Activated naive CD4-positive, alpha-beta T cell treated with anti-CD3 and anti-CD28 coated beads for 36 hours (primary cell): ENCODE measurements at regions of chr2 and their contacts with region 1.

Region 1: DNA sequence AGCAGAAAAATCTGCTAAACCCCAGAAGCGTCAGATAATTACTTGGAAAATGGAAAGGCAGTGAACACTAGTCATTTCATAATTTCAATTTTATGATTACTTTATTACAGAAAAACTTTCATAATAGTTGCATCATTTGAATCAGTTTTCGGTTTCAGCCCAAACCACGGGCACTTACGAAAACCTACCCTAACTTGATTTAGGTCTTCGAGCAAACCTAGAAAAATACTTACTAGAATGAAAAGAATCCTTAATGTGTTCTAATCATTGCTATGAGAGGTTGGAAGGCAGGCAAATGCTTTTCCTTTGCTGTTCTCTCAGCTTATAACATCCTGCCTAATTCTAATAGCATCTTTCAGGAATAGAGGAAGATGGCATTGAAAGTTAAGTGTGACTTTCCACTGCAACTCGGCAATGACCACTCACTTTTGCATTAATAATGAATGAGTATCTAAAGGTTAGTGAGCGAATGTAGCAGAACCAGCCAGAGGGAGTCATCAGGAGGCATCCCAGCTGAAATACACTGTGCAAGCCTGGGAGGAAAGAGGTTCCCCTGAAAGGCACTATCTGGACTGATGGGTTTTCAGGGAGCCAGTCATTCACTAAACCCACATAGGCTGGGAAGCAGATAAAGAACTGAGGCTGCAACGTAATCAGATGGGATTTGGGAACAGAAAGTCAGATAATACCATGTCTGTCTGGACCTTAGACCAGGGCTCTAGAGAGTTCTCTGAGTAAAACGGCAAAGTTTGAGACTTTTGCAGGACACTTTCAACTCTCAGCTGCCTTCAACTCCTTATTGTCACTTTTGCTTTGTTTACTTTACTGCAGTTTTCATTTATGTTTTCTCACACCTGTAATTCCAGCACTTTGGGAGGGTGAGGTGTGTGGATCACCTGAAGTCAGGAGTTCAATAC is 520.8 kb downstream of the RNF144A start:
- DNase-seq: peak; percentile 69
- H3K4me3 Mint-ChIP-seq: no peak overlapping the region
- H3K27ac Mint-ChIP-seq: peak overlapping the region; percentile 87
- H3K4me1 Mint-ChIP-seq: peaks cover 68% of the 10 kb centered on the region
- H3K27me3 Mint-ChIP-seq: no peaks in the 10 kb centered on the region

Region 2: GRCh38 chr2:7450188-7450832 is 12.3 kb after region 1 on chr2:
- CTCF ChIA-PET with region 1: interaction called, 10 read pairs
- intact Hi-C with region 1: loop called (anchors 1 kb)
- DNase-seq: peak; percentile 75
- H3K4me3 Mint-ChIP-seq: peak overlapping the region; percentile 41
- H3K27ac Mint-ChIP-seq: peak overlapping the region; percentile 88
- H3K4me1 Mint-ChIP-seq: peaks cover 66% of the 10 kb centered on the region
- H3K27me3 Mint-ChIP-seq: no peaks in the 10 kb centered on the region

Region 3: DNA sequence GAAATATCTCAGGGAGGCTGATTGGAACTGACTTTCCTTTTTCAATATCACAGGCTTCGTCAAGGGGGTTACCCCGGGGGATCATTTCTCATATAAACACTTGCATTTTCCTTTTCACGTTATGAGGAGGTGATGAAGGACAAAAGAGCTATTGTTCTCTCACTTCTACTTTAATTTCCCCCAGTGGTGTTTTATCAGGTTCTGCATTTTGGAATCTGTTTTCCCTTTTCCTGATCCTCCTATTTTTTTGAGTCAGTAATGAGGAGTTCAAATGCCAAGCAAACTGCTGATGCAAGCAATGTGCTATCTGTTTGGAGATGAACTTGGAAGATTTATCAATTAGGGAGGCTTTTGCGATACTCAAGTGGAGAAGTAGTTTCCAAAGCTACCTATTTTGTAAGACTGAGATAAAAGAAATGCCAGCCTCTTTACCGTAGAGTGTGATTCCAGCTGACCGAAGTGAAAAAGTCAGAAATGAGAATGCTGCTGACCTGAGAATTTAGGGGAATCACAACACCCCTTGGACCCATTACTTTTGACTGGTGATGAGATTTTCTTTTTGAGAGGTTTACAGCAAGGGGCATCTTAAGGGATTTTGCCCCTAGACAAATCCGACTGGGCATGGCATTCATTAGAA is 35.3 kb after region 1 on chr2:
- CTCF ChIA-PET with region 1: no interaction called
- intact Hi-C with region 1: loop called (anchors 1 kb)
- DNase-seq: no peak
- H3K4me3 Mint-ChIP-seq: no peak overlapping the region
- H3K27ac Mint-ChIP-seq: peak overlapping the region; percentile 72
- H3K4me1 Mint-ChIP-seq: peaks cover 46% of the 10 kb centered on the region
- H3K27me3 Mint-ChIP-seq: no peaks in the 10 kb centered on the region

Region 4: GRCh38 chr2:7567646-7568045 is 129.7 kb after region 1 on chr2:
- CTCF ChIA-PET with region 1: no interaction called
- intact Hi-C with region 1: loop called (anchors 1 kb)
- DNase-seq: peak; percentile 82
- H3K4me3 Mint-ChIP-seq: peak overlapping the region; percentile 36
- H3K27ac Mint-ChIP-seq: peak overlapping the region; percentile 82
- H3K4me1 Mint-ChIP-seq: peaks cover 58% of the 10 kb centered on the region
- H3K27me3 Mint-ChIP-seq: no peaks in the 10 kb centered on the region

Region 5: GRCh38 chr2:7758073-7758759 is 320.2 kb after region 1 on chr2:
- CTCF ChIA-PET with region 1: interaction called, 3 read pairs
- intact Hi-C with region 1: loop called (anchors 5 kb)
- DNase-seq: no peak
- H3K4me3 Mint-ChIP-seq: no peak overlapping the region
- H3K27ac Mint-ChIP-seq: no peak overlapping the region
- H3K4me1 Mint-ChIP-seq: peaks cover 12% of the 10 kb centered on the region
- H3K27me3 Mint-ChIP-seq: peaks cover 12% of the 10 kb centered on the region

Region 6: GRCh38 chr2:7930800-7931635 is 493.0 kb after region 1 on chr2:
- CTCF ChIA-PET with region 1: no interaction called
- intact Hi-C with region 1: loop called (anchors 2 kb)
- DNase-seq: peak; percentile 45
- H3K4me3 Mint-ChIP-seq: no peak overlapping the region
- H3K27ac Mint-ChIP-seq: peak overlapping the region; percentile 74
- H3K4me1 Mint-ChIP-seq: peaks cover 19% of the 10 kb centered on the region
- H3K27me3 Mint-ChIP-seq: no peaks in the 10 kb centered on the region

Region 7: DNA sequence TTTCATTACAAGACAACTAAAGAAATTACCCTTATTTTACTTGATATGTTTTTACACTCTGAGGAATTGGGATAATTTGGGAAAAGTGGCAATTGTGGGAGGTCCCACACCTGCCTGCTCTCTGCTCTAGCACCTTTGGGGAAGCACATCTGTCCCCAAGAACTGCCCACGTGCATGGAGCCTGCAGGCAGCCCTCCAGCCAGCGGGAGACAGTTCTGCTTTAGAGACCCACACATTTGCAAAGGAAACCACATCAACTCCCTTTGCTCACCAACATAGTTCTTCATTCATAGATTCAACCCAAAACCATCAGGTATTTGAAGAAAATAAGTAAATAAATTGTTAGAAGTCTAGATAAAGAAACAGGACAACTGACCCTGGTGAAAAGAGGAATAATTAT is 1004.0 kb after region 1 on chr2:
- CTCF ChIA-PET with region 1: no interaction called
- intact Hi-C with region 1: no loop called
- DNase-seq: no peak
- H3K4me3 Mint-ChIP-seq: no peak overlapping the region
- H3K27ac Mint-ChIP-seq: no peak overlapping the region
- H3K4me1 Mint-ChIP-seq: peaks cover 3% of the 10 kb centered on the region
- H3K27me3 Mint-ChIP-seq: no peaks in the 10 kb centered on the region

Region 8: GRCh38 chr2:8488001-8488738 is 1050.2 kb after region 1 on chr2:
- CTCF ChIA-PET with region 1: no interaction called
- intact Hi-C with region 1: loop called (anchors 1 kb)
- DNase-seq: peak; percentile 86
- H3K4me3 Mint-ChIP-seq: peak overlapping the region; percentile 59
- H3K27ac Mint-ChIP-seq: peak overlapping the region; percentile 61
- H3K4me1 Mint-ChIP-seq: peaks cover 30% of the 10 kb centered on the region
- H3K27me3 Mint-ChIP-seq: no peaks in the 10 kb centered on the region